ENCODE measurements at regions of chr14 and their contacts with region 1.

Region 1: DNA sequence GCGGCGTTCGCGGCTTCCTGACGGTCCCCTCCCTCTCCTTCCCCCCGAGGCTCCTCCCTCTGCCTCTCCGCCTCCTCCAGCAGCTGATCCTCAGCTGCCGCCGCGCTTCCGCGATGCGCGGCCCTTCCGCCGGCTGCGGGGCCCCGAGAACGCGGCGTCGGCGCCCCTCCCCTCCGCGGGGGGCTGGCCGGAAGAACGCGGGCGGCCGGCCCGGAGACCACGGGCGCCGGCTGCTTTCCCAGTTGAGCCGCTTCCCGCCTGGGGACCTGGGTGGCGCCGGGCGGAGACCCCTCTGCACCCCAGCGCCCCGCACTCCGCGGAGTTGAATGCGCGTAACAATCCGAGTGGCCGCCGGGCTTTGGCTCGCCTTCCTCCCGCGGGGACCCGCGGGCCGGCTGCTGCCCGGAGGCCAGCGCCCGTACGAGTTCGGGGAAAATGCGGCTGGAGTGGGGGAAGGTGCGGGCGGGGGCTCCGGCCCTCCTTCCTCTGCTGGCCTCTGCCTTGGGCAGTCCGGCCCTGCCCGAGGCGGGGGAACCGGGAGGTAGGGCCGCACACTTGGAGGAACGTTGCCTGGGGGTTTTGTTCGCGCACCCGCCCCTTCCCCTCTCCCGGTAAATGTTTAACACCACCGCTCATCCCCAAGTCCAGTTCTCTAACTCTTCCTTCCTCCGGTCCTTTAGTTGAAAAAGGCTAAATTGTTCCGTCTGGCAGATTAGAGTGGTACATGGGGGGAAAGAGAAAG is 383 bp upstream of the DCAF5 start:
- DNase-seq: peak; percentile 96
- H3K27ac ChIP-seq: peak overlapping the region; percentile 90
- CTCF ChIP-seq: no peak

Region 2: GRCh38 chr14:69129264-69129880 is 23.9 kb before region 1 on chr14:
- CTCF ChIA-PET with region 1: interaction called, 10 read pairs
- POLR2A ChIA-PET with region 1: no interaction called
- DNase-seq: peak; percentile 80
- H3K27ac ChIP-seq: peak overlapping the region; percentile 63
- CTCF ChIP-seq: peak; percentile 94

Measured in RWPE1 (cell line).